AG04449 (cell line): ENCODE measurements at regions of chr1 and their contacts with region 1.

Region 1: DNA sequence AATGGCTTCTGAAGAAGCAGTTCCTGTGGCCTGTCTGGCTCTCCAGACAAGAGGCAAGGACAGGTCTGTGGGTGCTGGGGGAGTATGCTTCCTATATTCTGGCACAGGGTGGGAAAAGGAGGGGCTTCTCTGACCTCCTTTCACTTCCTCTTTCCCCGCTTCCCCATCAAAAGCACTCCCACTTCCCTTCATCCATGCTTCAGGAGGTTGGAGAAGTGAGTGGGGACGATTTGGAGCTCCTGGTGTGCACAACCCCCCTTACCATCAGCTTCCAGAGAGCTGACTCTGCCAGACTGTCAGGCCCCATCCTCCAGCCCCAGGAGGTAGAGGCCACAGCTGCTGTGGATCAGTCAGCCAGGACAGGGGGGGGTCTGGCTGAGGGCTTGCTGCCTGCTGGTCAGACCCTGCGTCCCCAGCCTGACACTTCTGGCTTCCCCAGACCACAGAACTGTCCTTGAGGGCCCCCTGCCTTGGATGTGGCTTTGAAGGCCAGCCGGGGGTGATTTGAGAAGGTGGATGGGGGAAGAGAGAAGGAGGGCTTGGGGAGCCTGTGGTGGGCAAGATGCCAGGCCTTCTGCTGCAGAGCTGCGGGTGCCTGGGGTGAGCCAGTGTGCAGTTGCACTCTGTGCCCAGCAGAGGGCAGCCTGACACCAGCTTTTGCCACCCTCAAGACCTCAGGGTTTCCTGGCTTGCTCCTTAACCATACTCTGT is 21.5 kb upstream of the TMEM222 start:
- DNase-seq: peak; percentile 62
- H3K4me3 ChIP-seq: peak overlapping the region; percentile 29
- CTCF ChIP-seq: peak; percentile 99

Region 2: DNA sequence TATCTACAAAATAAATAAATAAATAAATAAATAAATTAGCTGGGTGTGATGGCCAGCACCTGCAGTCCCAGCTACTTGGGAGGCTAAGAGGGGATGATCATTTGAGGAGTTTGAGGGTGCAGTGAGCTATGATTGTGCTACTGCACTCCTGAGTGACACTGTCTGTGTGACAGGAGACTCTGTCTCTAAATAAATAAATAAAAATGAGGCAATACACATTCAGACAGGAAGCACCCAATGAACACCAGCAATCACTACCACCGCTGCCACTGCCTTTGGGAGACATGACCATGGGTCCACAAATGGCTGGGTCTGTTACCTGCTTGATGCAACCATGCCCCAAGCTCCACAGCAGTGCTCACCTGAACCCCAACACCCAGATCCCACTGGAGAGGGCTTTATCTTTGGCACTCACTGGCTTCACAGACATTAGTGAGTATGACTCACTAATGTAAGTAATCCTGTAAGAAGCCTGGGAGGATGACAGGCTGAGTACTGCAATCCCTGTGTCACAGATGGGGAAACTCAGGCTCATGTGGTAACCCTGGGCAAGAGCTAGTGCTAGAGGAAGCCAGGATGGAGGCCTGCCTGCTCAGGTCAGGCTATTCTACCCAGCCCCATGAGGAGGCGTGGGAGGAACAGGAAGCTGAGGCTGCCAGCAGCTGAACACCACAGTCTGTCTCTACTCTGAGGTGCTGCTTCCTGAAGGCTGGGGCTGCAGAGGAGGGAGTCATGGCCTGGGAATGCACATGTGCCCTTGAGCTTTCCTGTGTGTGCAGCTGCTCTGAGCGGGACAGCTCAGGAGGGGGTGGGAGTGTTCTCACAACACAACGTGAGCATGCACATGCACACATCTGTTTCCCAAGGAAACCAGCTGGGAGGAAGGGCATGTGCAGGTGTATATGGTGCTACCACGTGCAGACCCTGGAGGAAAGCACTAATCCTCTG is 188.6 kb before region 1 on chr1:
- CTCF ChIA-PET with region 1: interaction called, 254 read pairs
- POLR2A ChIA-PET with region 1: interaction called, 11 read pairs
- DNase-seq: peak; percentile 98
- H3K4me3 ChIP-seq: no peak overlapping the region
- CTCF ChIP-seq: peak; percentile 72

Region 3: DNA sequence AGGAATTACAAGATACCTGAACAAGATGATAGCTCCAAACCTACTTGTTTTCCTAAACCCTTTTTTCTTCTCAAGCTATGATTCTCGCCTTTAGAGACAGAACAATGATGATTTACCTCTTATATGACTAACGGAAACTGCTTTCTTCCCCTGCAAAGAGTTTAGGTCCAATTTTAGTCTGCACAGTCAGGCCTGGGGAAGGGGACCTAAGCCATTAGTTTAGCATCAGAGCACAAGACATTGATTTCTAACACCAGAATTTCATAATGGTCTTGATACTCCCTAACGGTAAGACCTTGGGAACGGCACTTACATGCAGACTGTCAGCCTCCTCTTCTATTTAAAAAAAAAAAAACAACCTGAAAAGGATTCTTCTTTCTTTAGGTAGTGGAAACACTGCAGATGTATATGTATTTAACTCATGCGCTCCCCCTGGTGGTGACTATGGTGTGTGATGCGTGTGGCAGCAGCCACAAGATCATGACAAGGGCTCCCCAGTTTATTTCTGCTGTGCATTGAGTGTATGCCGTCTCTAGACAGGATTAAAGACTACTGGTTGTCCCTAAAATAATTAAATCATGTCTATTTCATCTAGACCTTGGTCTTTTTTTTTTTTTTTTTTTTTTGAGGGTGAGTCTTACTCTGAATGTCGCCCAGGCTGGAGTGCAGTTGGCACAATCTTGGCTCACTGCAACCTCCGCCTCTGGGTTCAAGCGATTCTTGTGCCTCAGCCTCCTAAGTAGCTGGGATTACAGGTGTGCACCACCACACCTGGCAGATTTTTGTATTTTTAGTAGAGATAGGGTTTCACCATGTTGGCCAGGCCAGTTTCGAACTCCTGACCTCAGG is 15.8 kb before region 1 on chr1:
- CTCF ChIA-PET with region 1: interaction called, 246 read pairs
- POLR2A ChIA-PET with region 1: no interaction called
- DNase-seq: no peak
- H3K4me3 ChIP-seq: no peak overlapping the region
- CTCF ChIP-seq: peak; percentile 73

Region 4: DNA sequence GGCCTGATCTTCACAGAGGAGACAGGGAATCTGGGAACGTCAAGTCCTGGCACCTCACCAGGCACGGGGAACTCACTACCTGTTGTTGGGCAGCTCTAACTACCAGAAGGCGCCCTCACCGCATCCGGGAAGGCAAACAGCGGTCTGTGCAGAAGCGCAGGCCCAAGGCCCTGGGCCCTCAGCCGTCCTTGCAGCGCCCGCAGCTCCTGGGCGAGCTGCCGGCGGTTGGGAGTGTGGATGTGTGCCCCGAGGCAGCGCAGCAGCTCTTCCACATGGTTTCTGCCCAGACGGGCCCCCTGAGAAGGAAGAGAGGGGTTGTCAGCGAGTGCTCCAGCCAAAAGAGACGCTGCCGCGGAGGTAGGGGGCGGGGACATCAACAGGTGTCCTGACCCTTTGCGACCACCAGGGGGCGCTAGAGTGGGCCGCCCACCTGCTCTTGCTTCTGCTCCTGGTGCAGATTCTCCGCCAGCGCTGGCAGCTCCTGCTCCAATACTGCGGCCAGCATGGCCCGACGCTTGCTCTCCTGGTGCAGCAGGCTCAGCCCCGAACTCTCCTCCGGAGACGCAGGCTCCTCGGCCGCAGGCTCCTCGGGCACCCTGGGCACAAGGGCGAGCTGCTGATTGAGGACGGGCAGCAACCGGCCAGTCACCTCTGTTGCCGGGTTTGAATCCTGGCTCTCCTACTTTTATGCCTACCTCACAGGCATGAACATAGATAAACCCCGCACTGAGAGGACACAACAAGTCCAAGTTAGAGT is 57.0 kb after region 1 on chr1:
- CTCF ChIA-PET with region 1: interaction called, 95 read pairs
- POLR2A ChIA-PET with region 1: interaction called, 3 read pairs
- DNase-seq: no peak
- H3K4me3 ChIP-seq: no peak overlapping the region
- CTCF ChIP-seq: peak; percentile 92

Region 5: GRCh38 chr1:27556781-27557595 is 256.5 kb after region 1 on chr1:
- CTCF ChIA-PET with region 1: interaction called, 14 read pairs
- POLR2A ChIA-PET with region 1: no interaction called
- DNase-seq: peak; percentile 76
- H3K4me3 ChIP-seq: peak overlapping the region; percentile 29; the same call in 1 of the 2 replicates
- CTCF ChIP-seq: peak; percentile 88